Heart left ventricle (tissue), 16 donors: ENCODE measurements at regions of chr10 and their contacts with region 1.

Region 1: DNA sequence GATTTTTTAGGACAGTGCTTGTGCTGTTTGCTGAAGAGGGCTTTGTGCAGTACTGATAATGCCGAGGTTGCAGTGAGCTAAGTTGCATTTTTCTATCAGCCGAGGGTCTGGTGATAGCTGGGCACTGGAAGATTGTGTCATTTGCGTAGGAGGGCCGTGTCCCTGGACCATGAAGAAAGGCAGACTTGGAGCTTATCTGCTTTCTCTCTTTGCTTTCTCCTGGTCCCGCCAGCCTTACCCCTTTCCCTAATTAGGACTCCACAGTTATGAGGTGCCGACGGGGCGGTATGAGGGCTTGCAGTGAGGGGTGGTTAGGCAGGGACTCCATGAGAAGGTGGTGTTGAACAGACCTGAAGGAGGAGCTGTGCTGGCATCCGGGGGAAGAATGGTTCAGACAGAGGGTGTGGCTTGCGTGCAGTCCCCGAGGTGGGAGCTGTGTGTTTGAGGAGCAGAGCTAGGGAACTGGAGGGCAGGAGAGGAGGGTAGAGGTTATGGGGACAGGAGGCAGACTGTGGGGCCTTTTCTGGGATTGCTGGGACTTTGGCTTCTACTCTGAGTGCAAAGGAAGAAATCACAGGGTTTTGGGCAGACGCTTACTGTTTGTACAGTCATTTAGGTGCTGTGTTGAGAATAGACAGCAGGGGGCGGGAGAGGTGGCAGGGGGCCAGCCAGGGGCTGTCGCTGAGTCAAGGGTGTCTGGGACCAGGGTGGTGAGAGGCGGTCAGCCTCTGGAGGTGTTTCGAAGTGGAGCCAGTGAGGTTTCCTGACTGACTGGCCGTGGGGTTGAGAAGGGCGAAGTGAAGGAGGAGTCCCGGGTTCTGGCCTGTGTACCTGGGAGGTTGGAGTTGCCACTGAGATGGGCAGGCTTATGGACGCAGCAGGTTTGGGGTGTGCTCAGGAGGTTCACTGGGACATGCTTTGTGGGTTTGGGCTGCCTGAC is 43.4 kb downstream of the PRF1 start:
- DNase-seq: peak; percentile 56 to 85 (median 68)
- ATAC-seq: peak; percentile 62 to 74 (median 66)
- H3K4me3 ChIP-seq: peak overlapping the region in 7 of 12 donors; percentile 4 to 34 (median 19)
- H3K27ac ChIP-seq: peak overlapping the region in 9 of 12 donors; percentile 25 to 72 (median 54)
- H3K4me1 ChIP-seq: peaks cover 0 to 46% (median 32%) of the 10 kb centered on the region in 12 donors
- H3K27me3 ChIP-seq: no peaks in the 10 kb centered on the region
- CTCF ChIP-seq: peak in 11 of 12 donors; percentile 36 to 74 (median 48)
- POLR2A ChIP-seq: no peak

Region 2: DNA sequence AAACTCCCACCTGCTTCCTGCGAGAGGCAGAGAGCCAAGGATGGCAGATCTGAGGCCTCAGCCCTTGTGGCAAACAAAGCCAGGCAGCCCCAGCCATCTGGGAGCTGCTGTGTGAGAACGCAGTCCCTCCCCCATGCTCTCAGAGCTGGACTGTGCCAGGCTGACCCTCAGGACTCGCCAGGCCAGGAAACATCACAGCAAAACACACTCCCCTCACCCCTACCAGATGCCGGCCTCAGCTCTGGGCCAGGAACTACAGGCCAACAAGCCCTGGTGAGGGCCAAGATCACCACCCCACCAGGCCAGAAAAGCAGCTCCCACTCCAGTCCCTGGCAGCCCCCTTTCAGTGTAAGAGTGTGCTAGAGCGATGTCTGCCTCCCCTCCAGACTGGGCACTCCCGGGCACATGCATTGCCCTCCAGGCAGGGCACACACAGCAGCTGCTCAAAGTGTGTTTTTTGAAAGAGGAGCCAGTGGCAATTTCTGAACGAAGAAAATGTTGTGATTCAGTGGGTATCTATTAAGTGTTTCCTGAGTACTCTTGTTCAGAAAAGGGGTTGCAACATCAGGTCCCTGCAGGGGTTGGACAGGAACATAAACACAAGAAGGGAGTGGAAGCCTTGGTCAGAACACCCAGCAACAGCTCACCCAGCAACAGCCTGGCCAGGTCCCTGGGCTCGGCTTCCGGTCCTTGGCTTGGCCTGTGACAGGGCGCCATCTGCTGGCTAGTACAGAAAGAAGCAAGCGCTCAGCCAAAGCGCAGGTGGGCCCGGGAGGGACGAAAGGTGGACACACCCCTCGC is 195.0 kb before region 1 on chr10:
- intact Hi-C with region 1: no loop called
- DNase-seq: peak; percentile 88 to 94 (median 92)
- ATAC-seq: peak; percentile 93 to 99 (median 98)
- H3K4me3 ChIP-seq: peak overlapping the region in 3 of 12 donors; percentile 4 to 14 (median 5)
- H3K27ac ChIP-seq: peak overlapping the region; percentile 39 to 84 (median 76)
- H3K4me1 ChIP-seq: peaks cover 0 to 18% (median 15%) of the 10 kb centered on the region in 12 donors
- H3K27me3 ChIP-seq: no peaks in the 10 kb centered on the region
- CTCF ChIP-seq: peak; percentile 84 to 98 (median 92)
- POLR2A ChIP-seq: no peak

Region 3: GRCh38 chr10:70508912-70509756 is 50.0 kb before region 1 on chr10:
- intact Hi-C with region 1: no loop called
- DNase-seq: peak; percentile 64 to 80 (median 74)
- ATAC-seq: peak; percentile 81 to 86 (median 85)
- H3K4me3 ChIP-seq: peak overlapping the region in 2 of 12 donors; percentile 5
- H3K27ac ChIP-seq: peak overlapping the region in 11 of 12 donors; percentile 47 to 80 (median 70)
- H3K4me1 ChIP-seq: peaks cover 14 to 72% (median 52%) of the 10 kb centered on the region in 12 donors
- H3K27me3 ChIP-seq: no peaks in the 10 kb centered on the region
- CTCF ChIP-seq: peak in 2 of 12 donors; percentile 8 to 20
- POLR2A ChIP-seq: no peak

Region 4: DNA sequence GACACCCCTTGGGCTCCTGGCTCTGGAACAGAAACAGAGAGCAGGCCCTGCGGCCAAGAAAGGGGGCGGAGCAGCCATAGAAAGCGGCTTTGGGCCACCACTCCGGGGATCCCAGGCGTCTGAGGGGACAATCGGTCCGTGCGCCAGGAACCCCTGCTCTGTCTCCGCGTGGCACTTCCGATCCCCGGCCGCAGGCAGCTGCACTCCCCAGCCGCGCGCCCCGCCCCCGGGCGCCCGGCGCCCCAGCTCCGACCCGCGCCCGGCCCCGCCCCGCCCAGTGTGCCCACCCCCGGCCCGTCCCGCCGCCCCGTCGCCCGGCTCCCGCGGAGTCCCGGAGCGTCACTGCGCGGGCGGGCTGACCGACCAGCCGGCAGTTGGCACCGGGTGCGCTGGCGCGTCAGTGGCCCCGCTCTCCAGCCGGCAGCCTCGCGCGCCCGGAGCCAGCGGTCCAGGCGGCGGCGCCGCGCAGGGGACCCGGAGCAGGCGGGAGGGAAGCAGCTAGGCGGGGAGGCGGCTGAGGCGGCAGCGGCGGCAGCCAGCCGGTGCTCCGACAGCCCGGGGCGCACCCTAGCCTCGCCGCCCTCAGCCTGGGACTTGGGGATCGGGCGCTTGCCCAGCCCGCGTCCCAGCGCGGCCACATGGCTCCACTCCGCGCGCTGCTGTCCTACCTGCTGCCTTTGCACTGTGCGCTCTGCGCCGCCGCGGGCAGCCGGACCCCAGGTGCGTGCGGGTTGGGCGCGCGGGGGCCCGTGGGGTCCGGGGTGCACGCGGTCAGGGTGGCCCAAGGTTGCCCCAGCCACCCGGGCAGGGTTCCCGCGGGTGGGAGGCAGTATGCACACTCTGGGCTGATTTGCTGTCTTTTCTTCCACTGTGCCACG is 113.3 kb after region 1 on chr10 and contains the start of gene ADAMTS14:
- intact Hi-C with region 1: loop called in 9 of 10 experiments (anchors 2 to 10 kb)
- DNase-seq: peak in 4 of 5 donors; percentile 45 to 56 (median 52)
- ATAC-seq: peak in 3 of 4 donors; percentile 26 to 68 (median 65)
- H3K4me3 ChIP-seq: peak within 1 kb of the TSS; percentile 10 to 57 (median 49)
- H3K27ac ChIP-seq: peak within 1 kb of the TSS in 4 of 12 donors; percentile 34 to 71 (median 38)
- H3K4me1 ChIP-seq: peaks cover 0 to 33% (median 17%) of the 10 kb centered on the region in 12 donors
- H3K27me3 ChIP-seq: peaks cover 0 to 23% (median 0%) of the 10 kb centered on the region in 9 donors
- CTCF ChIP-seq: no peak
- POLR2A ChIP-seq: no peak
- total RNA-seq, gene ADAMTS14: 0.16 to 3.8 (median 0.47) TPM in 8 of 9 donors, not detected in the other

Region 5: GRCh38 chr10:70693619-70694335 is 134.6 kb after region 1 on chr10:
- intact Hi-C with region 1: loop called in 1 of 10 experiments (anchors 5 kb)
- DNase-seq: peak in 4 of 5 donors; percentile 39 to 63 (median 54)
- ATAC-seq: peak in 3 of 4 donors; percentile 27 to 61 (median 56)
- H3K4me3 ChIP-seq: no peak overlapping the region
- H3K27ac ChIP-seq: peak overlapping the region in 1 of 12 donors; percentile 7
- H3K4me1 ChIP-seq: peaks cover 0 to 31% (median 0%) of the 10 kb centered on the region in 12 donors
- H3K27me3 ChIP-seq: no peaks in the 10 kb centered on the region
- CTCF ChIP-seq: no peak
- POLR2A ChIP-seq: no peak

Region 6: GRCh38 chr10:70758757-70759514 is 199.8 kb after region 1 on chr10:
- intact Hi-C with region 1: loop called in 3 of 10 experiments (anchors 2 kb)
- DNase-seq: peak; percentile 59 to 77 (median 73)
- ATAC-seq: peak; percentile 27 to 80 (median 53)
- H3K4me3 ChIP-seq: no peak overlapping the region
- H3K27ac ChIP-seq: no peak overlapping the region
- H3K4me1 ChIP-seq: peaks cover 0 to 19% (median 2%) of the 10 kb centered on the region in 12 donors
- H3K27me3 ChIP-seq: no peaks in the 10 kb centered on the region
- CTCF ChIP-seq: peak; percentile 65 to 87 (median 76)
- POLR2A ChIP-seq: no peak